Left ventricle myocardium inferior (tissue), 1 donor: ENCODE measurements at regions of chr22 and their contacts with region 1.

Region 1: DNA sequence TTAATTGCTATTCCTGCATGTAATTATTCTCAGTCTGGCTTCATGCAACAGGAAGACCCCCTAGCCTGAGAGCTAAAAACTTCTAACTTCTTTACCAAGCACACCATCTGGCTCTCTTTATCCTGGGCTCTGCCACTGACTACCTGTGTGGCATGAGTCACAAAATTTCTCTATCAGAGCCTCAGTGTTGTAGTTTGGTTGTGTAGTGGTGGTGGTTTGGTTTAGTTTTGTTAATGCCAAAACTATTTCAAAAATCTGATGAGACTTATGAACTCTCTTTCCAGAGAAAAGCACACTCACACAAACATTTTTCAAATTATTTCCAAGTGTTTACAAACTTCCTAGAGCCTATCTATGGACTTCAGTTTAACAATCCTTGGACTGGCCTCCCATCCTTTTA is 7.5 kb upstream of the IL17RA start:
- DNase-seq: no peak
- H3K4me3 ChIP-seq: no peak overlapping the region
- H3K27ac ChIP-seq: no peak overlapping the region
- H3K4me1 ChIP-seq: no peaks in the 10 kb centered on the region
- H3K27me3 ChIP-seq: no peaks in the 10 kb centered on the region
- CTCF ChIP-seq: no peak

Region 2: GRCh38 chr22:17501679-17502285 is 424.5 kb after region 1 on chr22:
- intact Hi-C with region 1: loop called (anchors 10 kb)
- DNase-seq: no peak
- H3K4me3 ChIP-seq: no peak overlapping the region
- H3K27ac ChIP-seq: no peak overlapping the region
- H3K4me1 ChIP-seq: no peaks in the 10 kb centered on the region
- H3K27me3 ChIP-seq: no peaks in the 10 kb centered on the region
- CTCF ChIP-seq: peak; percentile 72